Endothelial cell of umbilical vein (primary cell): ENCODE measurements at regions of chr18 and their contacts with region 1.

Region 1: GRCh38 chr18:46660955-46661749 is 4.1 kb upstream of the LOXHD1 start:
- DNase-seq: peak; percentile 19
- H3K4me3 ChIP-seq: no peak overlapping the region
- H3K27ac ChIP-seq: no peak overlapping the region
- H3K4me1 ChIP-seq: no peaks in the 10 kb centered on the region
- H3K27me3 ChIP-seq: peaks cover 0 to 3% of the 10 kb centered on the region in 2 experiments
- CTCF ChIP-seq: no peak
- POLR2A ChIP-seq: no peak

Region 2: DNA sequence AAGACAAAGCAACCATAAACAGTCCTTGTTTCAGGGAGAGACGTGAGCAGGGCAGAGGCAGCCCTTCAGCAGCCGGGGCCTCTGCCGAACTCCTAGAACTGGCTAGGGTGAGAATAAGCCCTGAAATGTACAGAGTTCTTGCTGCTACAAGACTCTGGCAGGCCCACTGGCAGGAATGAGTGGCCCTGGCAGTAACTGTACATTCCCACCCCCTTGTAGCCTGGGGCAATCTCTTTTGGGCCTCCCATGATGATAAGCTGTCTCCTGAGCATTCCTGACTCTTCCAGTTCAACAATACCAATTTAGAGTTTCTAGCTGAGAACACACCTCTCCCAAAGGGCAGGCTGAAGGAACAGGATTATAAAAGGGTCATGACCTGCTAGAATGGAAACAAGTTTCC is 502.7 kb before region 1 on chr18:
- CTCF ChIA-PET with region 1: interaction called, 199 read pairs
- POLR2A ChIA-PET with region 1: no interaction called
- dilution Hi-C with region 1: no loop called
- intact Hi-C with region 1: no loop called
- DNase-seq: no peak
- H3K4me3 ChIP-seq: no peak overlapping the region
- H3K27ac ChIP-seq: no peak overlapping the region
- H3K4me1 ChIP-seq: no peaks in the 10 kb centered on the region
- H3K27me3 ChIP-seq: no peaks in the 10 kb centered on the region
- CTCF ChIP-seq: no peak
- POLR2A ChIP-seq: no peak

Region 3: DNA sequence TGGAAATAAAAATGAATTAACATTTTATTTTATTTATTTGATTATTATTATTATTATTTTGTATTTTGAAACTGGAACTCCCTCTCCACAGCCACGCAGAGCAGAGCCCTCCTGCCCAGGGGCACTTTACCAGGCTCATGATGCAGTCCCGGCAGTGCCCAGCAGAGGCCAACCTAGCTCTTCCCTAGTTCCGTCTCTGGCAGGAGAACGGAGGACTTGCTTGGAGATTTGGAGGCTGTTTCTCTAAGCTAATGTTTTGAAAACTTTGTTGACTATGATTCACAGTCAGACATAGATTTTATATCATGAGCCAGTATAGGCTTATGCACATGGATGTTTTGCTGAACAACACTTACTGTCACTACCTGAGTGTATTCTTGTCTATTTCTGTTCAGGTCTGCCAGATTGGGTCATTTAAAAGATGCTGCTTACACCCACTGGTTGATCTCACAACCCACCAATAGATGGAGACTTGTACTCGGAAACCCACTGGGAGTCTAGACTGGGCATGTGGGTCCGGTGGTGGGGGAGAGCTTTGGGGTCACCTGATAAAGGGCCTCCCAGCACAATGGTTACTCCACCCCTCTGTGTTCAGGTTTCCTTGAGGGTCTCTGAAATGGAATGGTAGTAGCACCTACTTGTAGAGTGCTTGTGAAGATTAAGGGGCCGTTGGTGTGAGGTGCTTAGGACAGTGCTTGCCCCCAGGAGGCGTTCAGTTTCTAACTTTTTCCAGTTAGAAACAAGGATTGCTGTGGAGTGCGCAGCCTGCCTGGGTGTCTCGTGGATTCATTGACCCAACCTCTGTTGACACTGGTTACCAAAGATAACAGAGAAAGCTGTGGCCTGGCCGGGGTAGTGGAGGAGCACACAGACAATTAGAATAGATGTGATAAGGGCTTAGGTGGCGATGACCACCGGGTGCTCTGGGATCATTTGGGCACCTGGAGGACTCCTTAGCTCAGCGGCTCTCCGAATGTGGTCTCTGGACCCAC is 379.7 kb before region 1 on chr18:
- CTCF ChIA-PET with region 1: interaction called, 168 read pairs
- POLR2A ChIA-PET with region 1: no interaction called
- dilution Hi-C with region 1: no loop called
- intact Hi-C with region 1: loop called (anchors 1 kb)
- DNase-seq: peak; percentile 61
- H3K4me3 ChIP-seq: no peak overlapping the region
- H3K27ac ChIP-seq: no peak overlapping the region
- H3K4me1 ChIP-seq: peaks cover 3% of the 10 kb centered on the region
- H3K27me3 ChIP-seq: no peaks in the 10 kb centered on the region
- CTCF ChIP-seq: peak; percentile 80 to 85
- POLR2A ChIP-seq: no peak

Region 4: GRCh38 chr18:46555724-46556123 is 105.4 kb before region 1 on chr18:
- CTCF ChIA-PET with region 1: interaction called, 50 read pairs
- POLR2A ChIA-PET with region 1: no interaction called
- dilution Hi-C with region 1: no loop called
- intact Hi-C with region 1: loop called (anchors 1 kb)
- DNase-seq: peak; percentile 2
- H3K4me3 ChIP-seq: no peak overlapping the region
- H3K27ac ChIP-seq: no peak overlapping the region
- H3K4me1 ChIP-seq: no peaks in the 10 kb centered on the region
- H3K27me3 ChIP-seq: no peaks in the 10 kb centered on the region
- CTCF ChIP-seq: no peak
- POLR2A ChIP-seq: no peak

Region 5: DNA sequence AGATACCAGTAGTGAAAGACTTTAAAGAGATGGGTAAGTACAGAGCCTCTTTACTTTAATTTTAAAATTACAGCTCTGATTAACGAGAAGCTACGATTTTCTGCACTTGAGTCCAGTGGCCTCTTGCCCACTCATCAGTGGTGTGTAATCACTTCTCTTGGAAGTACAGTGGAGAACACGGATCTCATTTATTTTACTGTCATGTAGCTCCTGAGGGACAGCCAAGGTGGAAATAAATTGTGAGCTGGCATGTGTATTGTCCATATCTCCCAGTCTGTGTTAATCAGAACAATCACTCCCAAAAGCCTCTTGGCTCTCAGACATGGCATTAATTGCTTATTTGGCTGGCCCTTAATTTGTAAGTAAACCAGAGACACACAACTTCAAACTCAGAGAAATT is 73.6 kb before region 1 on chr18:
- CTCF ChIA-PET with region 1: no interaction called
- POLR2A ChIA-PET with region 1: no interaction called
- dilution Hi-C with region 1: no loop called
- intact Hi-C with region 1: no loop called
- DNase-seq: no peak
- H3K4me3 ChIP-seq: no peak overlapping the region
- H3K27ac ChIP-seq: no peak overlapping the region
- H3K4me1 ChIP-seq: no peaks in the 10 kb centered on the region
- H3K27me3 ChIP-seq: no peaks in the 10 kb centered on the region
- CTCF ChIP-seq: no peak
- POLR2A ChIP-seq: no peak

Region 6: DNA sequence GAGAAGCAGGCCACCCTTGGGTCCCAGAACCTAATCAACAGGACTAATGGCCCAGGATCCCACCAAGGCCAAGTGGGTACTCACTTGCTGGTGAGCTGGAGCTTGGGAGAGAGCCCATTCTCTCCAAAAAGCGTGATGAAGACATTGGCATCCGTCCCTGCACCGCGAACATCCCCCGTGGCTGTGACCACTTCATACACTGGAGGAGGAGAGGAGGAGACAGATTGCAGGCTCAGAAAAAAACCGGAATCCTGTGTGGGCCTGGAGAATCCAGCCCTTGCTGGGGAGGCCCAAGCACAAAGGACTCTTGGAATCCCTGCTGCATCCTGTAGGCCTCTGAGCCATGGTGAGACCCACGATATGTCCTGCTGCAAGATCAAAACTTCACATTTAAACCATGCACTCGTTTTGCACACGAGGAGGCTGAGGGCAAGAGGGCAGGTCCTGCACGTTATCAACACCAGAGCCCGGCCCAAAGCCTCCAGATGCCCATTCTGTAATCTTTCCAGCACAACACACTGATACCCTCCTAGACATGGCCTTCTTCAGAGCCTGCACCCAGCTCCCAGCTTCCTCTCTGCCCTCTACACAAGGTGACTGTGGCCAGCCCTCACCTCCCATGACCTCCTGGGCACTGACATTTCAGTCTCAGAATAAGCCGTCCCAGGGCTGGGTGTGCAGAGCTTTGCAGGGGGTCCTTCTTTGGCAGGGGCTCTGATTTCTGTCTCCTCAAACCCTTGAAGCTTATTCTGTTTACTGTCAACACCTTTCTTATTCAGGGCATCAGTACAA is 11.9 kb before region 1 on chr18:
- CTCF ChIA-PET with region 1: interaction called, 16 read pairs
- POLR2A ChIA-PET with region 1: no interaction called
- dilution Hi-C with region 1: no loop called
- intact Hi-C with region 1: no loop called
- DNase-seq: no peak
- H3K4me3 ChIP-seq: no peak overlapping the region
- H3K27ac ChIP-seq: no peak overlapping the region
- H3K4me1 ChIP-seq: no peaks in the 10 kb centered on the region
- H3K27me3 ChIP-seq: peaks cover 0 to 7% of the 10 kb centered on the region in 2 experiments
- CTCF ChIP-seq: no peak
- POLR2A ChIP-seq: no peak

Region 7: DNA sequence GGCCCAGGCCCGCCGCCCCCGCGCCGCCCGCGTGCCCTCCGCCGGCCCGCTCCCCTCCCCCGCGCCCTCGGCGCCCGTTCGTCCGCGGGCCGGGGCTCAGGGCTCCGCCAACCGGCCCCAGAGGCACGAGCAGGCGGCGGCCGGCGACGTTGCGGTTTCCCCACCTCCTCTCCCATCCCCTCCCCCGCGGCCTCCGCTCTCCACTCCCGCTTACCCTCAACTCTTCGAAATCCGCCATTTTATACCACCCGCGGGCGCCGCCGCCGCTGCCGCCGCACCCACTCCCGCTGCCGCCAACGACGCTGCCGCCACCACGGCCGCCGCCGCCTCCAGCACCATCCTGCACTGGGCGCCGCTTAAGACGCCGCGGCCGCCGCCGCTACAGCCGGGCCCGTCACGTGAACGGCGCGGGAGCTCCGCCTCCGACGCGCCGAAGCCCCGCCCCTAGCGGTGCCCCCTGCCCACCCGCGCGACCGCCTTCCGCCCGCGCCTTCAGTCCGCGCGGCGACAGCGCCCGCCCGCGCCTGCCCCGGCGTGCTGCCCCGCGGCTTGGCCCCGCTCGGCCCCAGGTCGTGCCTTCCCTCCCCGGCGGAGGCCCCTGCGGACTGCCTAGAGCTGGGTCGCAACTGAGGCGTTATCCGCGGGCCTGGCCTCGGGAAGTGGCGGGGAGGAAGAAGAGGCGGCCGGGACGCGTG is 256.1 kb after region 1 on chr18 and contains the starts of genes KATNAL2 and PIAS2:
- CTCF ChIA-PET with region 1: interaction called, 7 read pairs
- POLR2A ChIA-PET with region 1: no interaction called
- dilution Hi-C with region 1: no loop called
- intact Hi-C with region 1: loop called (anchors 10 kb)
- DNase-seq: peak; percentile 85
- H3K4me3 ChIP-seq: peak within 1 kb of the TSS; percentile 68 to 93 (median 83)
- H3K27ac ChIP-seq: peak within 1 kb of the TSS; percentile 60
- H3K4me1 ChIP-seq: peaks cover 12% of the 10 kb centered on the region
- H3K27me3 ChIP-seq: no peaks in the 10 kb centered on the region
- CTCF ChIP-seq: no peak
- POLR2A ChIP-seq: peak; percentile 60
- total RNA-seq, gene KATNAL2: 1.3 and 1.8 TPM in 2 replicates
- total RNA-seq, gene PIAS2: 27.7 and 34.3 TPM in 2 replicates